ENCODE measurements at regions of chr16 and their contacts with region 1.

Region 1: DNA sequence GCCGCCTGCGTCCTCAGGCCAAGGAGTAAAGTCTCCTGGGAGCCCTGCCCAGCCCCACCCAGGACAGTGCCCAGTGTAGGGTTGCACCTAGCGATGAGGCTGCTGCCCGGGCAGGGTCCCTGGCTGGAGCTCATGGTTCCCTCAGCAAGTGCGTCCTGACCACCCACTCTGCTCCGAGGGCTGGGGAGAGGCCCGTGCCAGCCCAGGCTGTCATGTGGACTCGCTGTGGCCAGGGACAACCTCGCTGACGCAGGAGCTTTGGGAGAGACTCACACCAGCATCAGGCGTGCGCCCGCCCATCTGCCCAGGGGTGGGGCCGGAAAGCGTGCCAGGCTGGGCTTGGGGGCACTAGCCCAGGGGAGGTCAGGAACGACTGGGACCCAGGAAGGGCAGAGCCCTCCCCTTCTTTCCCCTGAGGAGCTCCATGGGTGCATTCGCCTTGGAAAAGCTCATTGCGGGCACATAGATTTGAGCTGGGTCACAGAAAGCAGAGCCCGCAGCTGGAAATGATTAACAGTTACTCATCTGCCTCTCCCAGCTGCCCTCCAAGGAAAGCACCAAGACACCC is 19.7 kb downstream of the DPEP1 start:
- DNase-seq: peak; percentile 84
- ATAC-seq: peak; percentile 82
- H3K4me3 ChIP-seq: peak overlapping the region; percentile 18; the same call in 1 of the 2 replicates
- H3K27ac ChIP-seq: peak overlapping the region; percentile 28
- H3K4me1 ChIP-seq: peaks cover 16% of the 10 kb centered on the region
- H3K27me3 ChIP-seq: peaks cover 3% of the 10 kb centered on the region; the same call in 1 of the 2 replicates
- CTCF ChIP-seq: no peak

Region 2: GRCh38 chr16:89458551-89458950 is 174.6 kb before region 1 on chr16:
- CTCF ChIA-PET with region 1: no interaction called
- POLR2A ChIA-PET with region 1: no interaction called
- intact Hi-C with region 1: no loop called
- DNase-seq: no peak
- ATAC-seq: no peak
- H3K4me3 ChIP-seq: no peak overlapping the region
- H3K27ac ChIP-seq: no peak overlapping the region
- H3K4me1 ChIP-seq: no peaks in the 10 kb centered on the region
- H3K27me3 ChIP-seq: no peaks in the 10 kb centered on the region
- CTCF ChIP-seq: no peak

Region 3: DNA sequence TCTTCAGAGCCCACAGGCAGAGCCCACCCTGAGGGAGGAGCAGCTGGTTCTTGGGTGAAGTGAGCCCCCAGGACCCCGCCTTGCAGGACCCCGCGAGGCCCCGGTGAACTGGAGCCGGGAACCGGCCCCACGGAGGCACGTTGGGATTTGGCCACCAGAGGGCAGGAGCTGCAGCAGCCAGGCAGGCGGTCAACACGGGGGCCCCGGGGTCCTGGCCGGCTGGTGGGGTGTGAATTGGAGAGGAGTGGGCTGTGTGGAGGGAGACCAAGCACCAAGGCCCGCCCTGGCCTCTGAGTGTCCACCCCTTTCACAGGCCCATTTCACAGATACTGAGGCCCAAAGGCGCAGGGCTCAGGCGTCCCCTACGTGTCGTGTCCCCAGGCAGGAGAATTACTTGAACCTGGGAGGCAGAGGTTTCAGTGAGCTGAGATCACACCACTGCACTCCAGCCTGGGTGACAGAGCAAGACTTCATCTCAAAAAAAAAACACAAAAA is 17.5 kb before region 1 on chr16:
- CTCF ChIA-PET with region 1: no interaction called
- POLR2A ChIA-PET with region 1: interaction called, 52 read pairs
- intact Hi-C with region 1: no loop called
- DNase-seq: no peak
- ATAC-seq: 0 out of 2 replicates have a peak, but pooled peaks have one; percentile 24
- H3K4me3 ChIP-seq: no peak overlapping the region
- H3K27ac ChIP-seq: no peak overlapping the region
- H3K4me1 ChIP-seq: no peaks in the 10 kb centered on the region
- H3K27me3 ChIP-seq: no peaks in the 10 kb centered on the region
- CTCF ChIP-seq: peak; percentile 68

Region 4: DNA sequence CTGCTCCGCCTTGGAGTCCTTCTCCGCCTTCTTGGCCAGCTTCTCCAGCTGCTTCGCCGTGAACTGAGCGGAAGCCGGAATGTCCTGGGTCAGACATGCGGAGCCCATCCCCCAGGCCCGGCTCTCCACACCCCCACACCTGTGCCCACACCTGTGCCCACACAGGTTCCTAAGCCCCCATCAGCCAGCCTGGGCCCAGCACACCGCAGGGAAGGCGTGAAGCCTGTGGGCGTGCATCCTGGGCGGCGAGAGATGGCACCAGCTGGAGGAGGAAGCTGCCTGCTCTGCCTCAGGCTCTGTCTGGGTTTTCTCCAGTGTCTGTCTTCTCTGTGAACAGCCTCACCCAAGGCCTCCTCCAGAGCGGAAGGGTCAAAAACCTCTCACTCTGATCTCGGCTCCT is 18.4 kb after region 1 on chr16:
- CTCF ChIA-PET with region 1: no interaction called
- POLR2A ChIA-PET with region 1: no interaction called
- intact Hi-C with region 1: no loop called
- DNase-seq: no peak
- ATAC-seq: no peak
- H3K4me3 ChIP-seq: no peak overlapping the region
- H3K27ac ChIP-seq: no peak overlapping the region
- H3K4me1 ChIP-seq: no peaks in the 10 kb centered on the region; the same call in 1 of the 2 replicates
- H3K27me3 ChIP-seq: no peaks in the 10 kb centered on the region
- CTCF ChIP-seq: no peak

Region 5: DNA sequence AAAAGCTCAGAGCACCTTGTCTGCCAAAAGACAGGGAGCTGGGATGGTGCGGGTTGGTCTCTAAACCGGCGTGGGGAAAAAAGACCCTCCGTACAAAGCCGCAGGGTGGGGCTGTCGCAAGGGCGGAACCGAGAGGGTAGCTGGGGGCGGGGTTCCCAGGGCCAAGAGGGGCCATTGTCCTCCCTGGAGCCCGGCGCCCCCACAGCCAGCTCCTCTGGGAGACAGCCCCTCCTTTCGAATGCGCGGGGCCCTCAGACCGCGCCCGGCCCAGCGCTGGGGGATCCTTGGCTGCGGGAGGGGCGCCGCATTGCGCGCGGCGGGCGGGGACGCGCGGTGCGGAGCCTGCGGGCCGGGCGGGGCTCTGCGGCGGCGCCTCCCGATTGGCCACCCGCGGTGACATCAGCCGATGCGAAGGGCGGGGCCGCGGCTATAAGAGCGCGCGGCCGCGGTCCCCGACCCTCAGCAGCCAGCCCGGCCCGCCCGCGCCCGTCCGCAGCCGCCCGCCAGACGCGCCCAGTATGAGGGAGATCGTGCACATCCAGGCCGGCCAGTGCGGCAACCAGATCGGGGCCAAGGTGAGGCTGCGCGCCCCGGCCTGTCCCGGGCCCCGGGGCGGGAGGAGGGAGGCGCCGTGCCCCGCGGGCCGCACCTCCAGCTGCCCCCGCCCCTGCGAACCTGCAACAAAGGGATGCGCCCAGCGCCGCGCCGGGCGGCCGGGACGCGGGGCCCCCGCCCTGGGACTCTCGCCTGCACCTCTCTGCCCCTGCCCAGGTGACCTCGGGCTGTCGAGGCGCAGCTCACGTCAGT is 289.9 kb after region 1 on chr16 and contains the start of gene TUBB3:
- CTCF ChIA-PET with region 1: no interaction called
- POLR2A ChIA-PET with region 1: no interaction called
- intact Hi-C with region 1: no loop called
- DNase-seq: peak; percentile 78
- ATAC-seq: peak; percentile 34
- H3K4me3 ChIP-seq: peak within 1 kb of the TSS; percentile 84
- H3K27ac ChIP-seq: peak within 1 kb of the TSS; percentile 99
- H3K4me1 ChIP-seq: peaks cover 26% of the 10 kb centered on the region
- H3K27me3 ChIP-seq: no peaks in the 10 kb centered on the region
- CTCF ChIP-seq: no peak
- total RNA-seq, gene TUBB3: 159 and 199 TPM in 2 replicates

Measured in PC-3 (cell line).